ENCODE measurements at regions of chr3 and their contacts with region 1.

Region 1: DNA sequence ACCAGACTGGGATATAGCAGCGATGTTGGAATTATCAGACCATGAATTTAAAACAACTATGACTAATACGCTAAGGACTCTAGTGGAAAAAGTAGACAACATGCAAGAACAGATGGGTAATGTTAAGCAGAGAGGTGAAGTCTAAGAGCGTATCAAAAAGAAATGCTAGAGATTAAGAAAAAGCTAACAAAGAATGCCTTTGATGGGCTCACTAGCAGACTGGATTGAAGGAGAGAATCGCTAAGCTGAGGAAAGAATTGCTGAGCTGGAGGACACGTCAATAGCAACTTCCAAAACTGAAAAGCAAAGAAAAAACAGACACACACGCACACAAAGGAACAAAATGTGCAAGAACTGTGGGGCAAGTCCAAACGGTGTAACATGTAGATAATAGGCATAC is 20.0 kb upstream of the CMTM6 start:
- DNase-seq: no peak
- H3K4me3 ChIP-seq: no peak overlapping the region
- H3K27ac ChIP-seq: no peak overlapping the region
- H3K4me1 ChIP-seq: no peaks in the 10 kb centered on the region
- H3K27me3 ChIP-seq: no peaks in the 10 kb centered on the region
- CTCF ChIP-seq: no peak
- POLR2A ChIP-seq: no peak

Region 2: DNA sequence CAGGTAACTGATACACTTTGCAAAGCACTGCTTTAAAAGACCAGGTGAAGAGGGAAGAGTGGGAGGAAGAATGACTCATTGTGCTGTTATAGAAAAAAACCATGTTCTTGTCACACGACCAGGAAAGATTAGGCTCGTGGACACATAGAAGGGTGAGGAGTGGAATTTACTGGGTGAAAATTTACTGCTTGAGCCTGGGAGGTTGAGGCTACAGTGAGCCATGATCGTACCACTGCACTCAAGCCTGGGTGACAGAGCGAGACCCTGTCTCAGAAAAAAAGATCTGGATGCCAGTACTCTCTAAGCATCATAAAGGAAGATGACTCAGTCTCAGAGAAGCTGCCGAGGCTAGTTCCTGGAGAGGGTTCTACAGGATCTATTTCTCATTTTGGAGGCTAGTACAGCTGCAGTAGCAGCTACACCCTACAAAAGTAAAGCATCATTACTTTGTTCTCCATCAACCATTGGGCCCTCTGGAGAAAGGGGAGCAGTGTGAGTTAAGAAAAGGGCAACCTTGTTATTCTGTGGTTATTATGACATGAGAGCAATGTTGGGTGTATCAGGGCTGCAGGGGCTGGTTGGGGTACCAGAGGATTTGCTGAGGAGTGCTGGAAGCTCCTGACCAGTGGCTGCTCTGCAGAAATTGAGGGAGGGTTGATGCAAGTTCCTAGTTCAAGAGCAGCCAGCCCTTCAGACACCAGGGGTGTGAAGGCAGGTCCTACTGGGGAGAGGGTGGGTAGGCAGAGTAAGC is 208.8 kb before region 1 on chr3:
- CTCF ChIA-PET with region 1: no interaction called
- POLR2A ChIA-PET with region 1: no interaction called
- dilution Hi-C with region 1: no loop called
- intact Hi-C with region 1: no loop called
- DNase-seq: peak; percentile 52
- H3K4me3 ChIP-seq: no peak overlapping the region
- H3K27ac ChIP-seq: no peak overlapping the region
- H3K4me1 ChIP-seq: peaks cover 9% of the 10 kb centered on the region
- H3K27me3 ChIP-seq: no peaks in the 10 kb centered on the region
- CTCF ChIP-seq: no peak
- POLR2A ChIP-seq: no peak

Region 3: GRCh38 chr3:32640944-32641343 is 118.3 kb after region 1 on chr3:
- CTCF ChIA-PET with region 1: no interaction called
- POLR2A ChIA-PET with region 1: interaction called, 11 read pairs
- dilution Hi-C with region 1: no loop called
- intact Hi-C with region 1: no loop called
- DNase-seq: no peak
- H3K4me3 ChIP-seq: no peak overlapping the region
- H3K27ac ChIP-seq: no peak overlapping the region
- H3K4me1 ChIP-seq: no peaks in the 10 kb centered on the region
- H3K27me3 ChIP-seq: peaks cover 11 to 14% of the 10 kb centered on the region in 2 experiments
- CTCF ChIP-seq: no peak
- POLR2A ChIP-seq: no peak